ENCODE measurements at regions of chr13 and their contacts with region 1.

Region 1: GRCh38 chr13:76009491-76009890 is 373.4 kb downstream of the LMO7 start:
- DNase-seq: no peak
- ATAC-seq: no peak
- H3K4me3 ChIP-seq: no peak overlapping the region
- H3K27ac ChIP-seq: no peak overlapping the region
- H3K4me1 ChIP-seq: peaks cover 0 to 23% (median 7%) of the 10 kb centered on the region in 12 donors
- H3K27me3 ChIP-seq: no peaks in the 10 kb centered on the region
- CTCF ChIP-seq: no peak
- POLR2A ChIP-seq: no peak

Region 2: DNA sequence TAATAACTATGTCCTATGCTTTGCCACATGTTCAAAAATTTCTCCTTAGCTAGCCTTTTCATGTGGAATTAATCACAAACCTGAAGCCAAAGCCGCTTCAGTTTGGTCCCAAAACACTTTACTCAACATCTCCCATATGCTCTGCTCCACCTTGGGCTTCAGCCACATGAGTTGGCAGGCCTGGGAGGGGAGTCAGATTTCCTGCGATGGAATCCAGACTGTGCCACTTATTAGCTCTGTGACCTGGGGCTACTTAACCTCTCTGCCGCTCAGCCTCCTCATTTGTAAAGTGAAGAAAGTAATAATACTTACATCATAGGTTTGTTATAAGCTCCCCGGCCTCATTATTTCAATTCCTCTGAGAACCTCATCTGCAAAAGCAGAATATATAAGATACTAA is 101.3 kb before region 1 on chr13:
- intact Hi-C with region 1: loop called in 3 of 10 experiments (anchors 5 to 10 kb)
- DNase-seq: peak; percentile 23 to 69 (median 39)
- ATAC-seq: peak; percentile 59 to 89 (median 80)
- H3K4me3 ChIP-seq: no peak overlapping the region
- H3K27ac ChIP-seq: no peak overlapping the region
- H3K4me1 ChIP-seq: peaks cover 0 to 8% (median 0%) of the 10 kb centered on the region in 12 donors
- H3K27me3 ChIP-seq: no peaks in the 10 kb centered on the region
- CTCF ChIP-seq: no peak
- POLR2A ChIP-seq: no peak

Region 3: GRCh38 chr13:76300688-76301087 is 291.2 kb after region 1 on chr13:
- intact Hi-C with region 1: no loop called
- DNase-seq: no peak
- ATAC-seq: no peak
- H3K4me3 ChIP-seq: no peak overlapping the region
- H3K27ac ChIP-seq: no peak overlapping the region
- H3K4me1 ChIP-seq: peaks cover 0 to 5% (median 0%) of the 10 kb centered on the region in 12 donors
- H3K27me3 ChIP-seq: no peaks in the 10 kb centered on the region
- CTCF ChIP-seq: no peak
- POLR2A ChIP-seq: no peak

Measured in heart left ventricle (tissue), 16 donors.